Dendritic cell treated with granulocyte-macrophage colony-stimulating factor and Interleukin-4, amounts not matched to agents 40 ng/mL and 50 ng/mL, for 4 days (primary cell): ENCODE measurements at regions of chr12 and their contacts with region 1.

Region 1: DNA sequence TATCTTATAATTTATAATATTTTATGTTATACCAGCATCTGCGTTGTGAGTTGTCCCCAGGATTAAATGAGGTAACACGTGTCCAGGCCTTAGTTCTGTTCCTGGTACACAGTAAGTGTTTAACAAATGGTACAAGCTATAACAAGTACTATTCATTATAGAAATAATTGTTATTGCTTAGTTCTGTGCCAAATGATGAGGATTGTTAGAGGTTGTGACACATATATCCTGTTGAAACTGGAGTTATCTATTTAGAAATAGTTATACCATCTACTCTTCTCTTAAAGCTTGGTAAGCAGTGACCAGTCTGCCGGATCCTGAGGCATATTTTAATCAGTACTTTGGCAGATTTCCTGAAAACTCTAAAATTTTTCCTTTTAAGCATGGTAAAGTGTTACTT is 1066.5 kb downstream of the TMTC2 start:
- H3K4me3 Mint-ChIP-seq: no peak overlapping the region
- H3K27ac Mint-ChIP-seq: no peak overlapping the region
- H3K4me1 Mint-ChIP-seq: no peaks in the 10 kb centered on the region
- H3K27me3 Mint-ChIP-seq: no peaks in the 10 kb centered on the region

Region 2: GRCh38 chr12:83408851-83409250 is 344.4 kb before region 1 on chr12:
- intact Hi-C with region 1: no loop called
- H3K4me3 Mint-ChIP-seq: no peak overlapping the region
- H3K27ac Mint-ChIP-seq: no peak overlapping the region
- H3K4me1 Mint-ChIP-seq: no peaks in the 10 kb centered on the region
- H3K27me3 Mint-ChIP-seq: no peaks in the 10 kb centered on the region

Region 3: GRCh38 chr12:83700838-83701237 is 52.4 kb before region 1 on chr12:
- intact Hi-C with region 1: loop called (anchors 1 kb)
- H3K4me3 Mint-ChIP-seq: no peak overlapping the region
- H3K27ac Mint-ChIP-seq: no peak overlapping the region
- H3K4me1 Mint-ChIP-seq: no peaks in the 10 kb centered on the region
- H3K27me3 Mint-ChIP-seq: no peaks in the 10 kb centered on the region